Psoas muscle (tissue), 8 donors: ENCODE measurements at regions of chr2 and their contacts with region 1.

Region 1: DNA sequence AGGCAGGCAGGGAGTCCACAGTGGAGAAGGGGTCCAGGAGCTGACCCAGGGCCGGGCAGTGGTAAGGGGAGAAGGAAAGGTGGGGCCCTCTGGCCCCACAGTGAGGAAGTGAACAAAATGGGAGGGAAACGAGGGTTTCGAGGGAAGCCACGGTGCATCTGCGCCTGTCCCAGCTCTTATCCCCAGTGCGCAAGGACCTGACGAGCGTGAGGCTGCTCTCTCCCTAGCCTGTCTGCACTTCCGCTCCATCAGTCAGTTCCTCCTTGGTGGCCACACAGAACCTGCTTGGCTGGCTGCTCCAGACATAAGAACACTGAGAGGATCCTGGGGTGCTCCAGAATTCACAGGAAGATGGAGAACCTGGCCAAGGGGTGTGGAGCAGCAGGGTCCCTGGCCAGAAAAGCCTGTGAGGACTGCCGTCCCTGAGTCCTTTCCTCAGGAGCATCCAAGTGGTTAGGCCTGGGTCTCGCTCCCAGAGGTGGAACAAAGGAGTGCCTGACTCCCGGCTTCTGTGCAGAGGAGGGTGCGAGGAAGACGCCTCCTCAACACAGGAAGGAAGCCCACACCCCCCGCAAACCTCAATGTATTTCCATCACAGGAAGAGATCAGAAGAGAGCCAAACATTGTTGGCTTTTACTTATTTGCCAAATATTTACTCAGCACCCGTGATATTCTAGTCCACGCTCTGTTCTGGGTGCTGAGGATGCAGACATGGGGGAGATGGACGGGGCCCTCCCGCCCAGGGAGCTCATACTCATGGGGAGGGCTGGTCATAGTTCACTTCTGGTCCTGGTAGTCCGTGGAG is 43.7 kb upstream of the SEMA4C start:
- DNase-seq: no peak
- ATAC-seq: peak in 2 of 4 donors; percentile 15 to 20
- H3K4me3 ChIP-seq: no peak overlapping the region
- H3K27ac ChIP-seq: no peak overlapping the region
- H3K4me1 ChIP-seq: no peaks in the 10 kb centered on the region
- H3K27me3 ChIP-seq: no peaks in the 10 kb centered on the region
- CTCF ChIP-seq: no peak

Region 2: GRCh38 chr2:96842600-96842999 is 71.0 kb before region 1 on chr2:
- intact Hi-C with region 1: no loop called
- DNase-seq: peak; percentile 85 to 96
- ATAC-seq: peak; percentile 71 to 80 (median 74)
- H3K4me3 ChIP-seq: peak overlapping the region; percentile 71
- H3K27ac ChIP-seq: peak overlapping the region; percentile 97
- H3K4me1 ChIP-seq: peaks cover 39% of the 10 kb centered on the region
- H3K27me3 ChIP-seq: no peaks in the 10 kb centered on the region
- CTCF ChIP-seq: no peak

Region 3: GRCh38 chr2:96869822-96870625 is 43.6 kb before region 1 on chr2 and contains the start of gene SEMA4C:
- intact Hi-C with region 1: loop called (anchors 5 kb)
- DNase-seq: peak; percentile 70 to 76
- ATAC-seq: peak; percentile 27 to 55 (median 52)
- H3K4me3 ChIP-seq: peak within 1 kb of the TSS; percentile 92
- H3K27ac ChIP-seq: peak within 1 kb of the TSS; percentile 86
- H3K4me1 ChIP-seq: peaks cover 26% of the 10 kb centered on the region
- H3K27me3 ChIP-seq: no peaks in the 10 kb centered on the region
- CTCF ChIP-seq: no peak
- total RNA-seq, gene SEMA4C: 9.5 to 10.8 (median 10.2) TPM

Region 4: GRCh38 chr2:96875498-96876268 is 37.9 kb before region 1 on chr2:
- intact Hi-C with region 1: loop called (anchors 5 kb)
- DNase-seq: no peak
- ATAC-seq: no peak
- H3K4me3 ChIP-seq: no peak overlapping the region
- H3K27ac ChIP-seq: no peak overlapping the region
- H3K4me1 ChIP-seq: peaks cover 15% of the 10 kb centered on the region
- H3K27me3 ChIP-seq: no peaks in the 10 kb centered on the region
- CTCF ChIP-seq: no peak